Left ventricle myocardium inferior (tissue), 1 donor: ENCODE measurements at regions of chr1 and their contacts with region 1.

Region 1: DNA sequence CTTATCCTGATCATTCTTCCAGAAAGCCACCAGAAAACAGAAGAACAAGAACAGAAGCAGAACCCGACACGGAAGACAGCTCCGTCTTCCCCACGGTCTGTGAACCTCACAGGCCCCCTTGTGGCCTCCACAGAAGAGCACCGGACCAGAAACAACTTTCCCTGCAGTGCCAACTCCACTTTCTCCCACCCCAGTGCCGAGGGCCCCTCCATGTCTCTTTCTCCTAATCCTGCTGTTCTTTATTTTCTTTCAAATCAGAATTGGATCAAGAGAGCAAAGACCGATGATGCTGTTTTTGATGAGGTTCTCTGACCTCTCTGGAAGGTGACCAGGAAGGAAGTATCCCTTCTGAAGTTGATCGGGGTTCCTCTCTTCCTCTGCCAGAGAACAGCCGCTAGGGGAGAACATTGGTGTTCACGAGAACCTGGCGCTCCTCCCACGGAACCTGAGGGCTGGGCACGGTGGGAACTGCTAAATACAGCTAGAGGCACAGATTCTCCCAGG is 58.9 kb upstream of the CTTNBP2NL start:
- DNase-seq: peak; percentile 54
- H3K4me3 ChIP-seq: peak overlapping the region; percentile 34
- H3K27ac ChIP-seq: no peak overlapping the region
- H3K4me1 ChIP-seq: peaks cover 9% of the 10 kb centered on the region
- H3K27me3 ChIP-seq: peaks cover 6% of the 10 kb centered on the region
- CTCF ChIP-seq: peak; percentile 81

Region 2: GRCh38 chr1:111789666-111790316 is 547.3 kb before region 1 on chr1:
- intact Hi-C with region 1: loop called (anchors 10 kb)
- DNase-seq: no peak
- H3K4me3 ChIP-seq: no peak overlapping the region
- H3K27ac ChIP-seq: peak overlapping the region; percentile 37
- H3K4me1 ChIP-seq: peaks cover 23% of the 10 kb centered on the region
- H3K27me3 ChIP-seq: no peaks in the 10 kb centered on the region
- CTCF ChIP-seq: peak; percentile 41

Region 3: GRCh38 chr1:112674439-112674985 is 337.4 kb after region 1 on chr1 and contains the start of gene MOV10:
- intact Hi-C with region 1: no loop called
- DNase-seq: peak; percentile 81
- H3K4me3 ChIP-seq: peak within 1 kb of the TSS; percentile 93
- H3K27ac ChIP-seq: peak within 1 kb of the TSS; percentile 91
- H3K4me1 ChIP-seq: peaks cover 43% of the 10 kb centered on the region
- H3K27me3 ChIP-seq: no peaks in the 10 kb centered on the region
- CTCF ChIP-seq: no peak
- total RNA-seq, gene MOV10: 12.7 TPM